Breast epithelium (tissue), 4 donors: ENCODE measurements at regions of chr13 and their contacts with region 1.

Region 1: GRCh38 chr13:39350461-39350881 is 252.5 kb downstream of the LHFPL6 start:
- DNase-seq: no peak
- H3K4me3 ChIP-seq: peak overlapping the region in 1 of 3 donors; percentile 14
- H3K27ac ChIP-seq: peak overlapping the region; percentile 2 to 51
- H3K4me1 ChIP-seq: no peaks in the 10 kb centered on the region
- H3K27me3 ChIP-seq: no peaks in the 10 kb centered on the region
- CTCF ChIP-seq: no peak
- POLR2A ChIP-seq: no peak

Region 2: DNA sequence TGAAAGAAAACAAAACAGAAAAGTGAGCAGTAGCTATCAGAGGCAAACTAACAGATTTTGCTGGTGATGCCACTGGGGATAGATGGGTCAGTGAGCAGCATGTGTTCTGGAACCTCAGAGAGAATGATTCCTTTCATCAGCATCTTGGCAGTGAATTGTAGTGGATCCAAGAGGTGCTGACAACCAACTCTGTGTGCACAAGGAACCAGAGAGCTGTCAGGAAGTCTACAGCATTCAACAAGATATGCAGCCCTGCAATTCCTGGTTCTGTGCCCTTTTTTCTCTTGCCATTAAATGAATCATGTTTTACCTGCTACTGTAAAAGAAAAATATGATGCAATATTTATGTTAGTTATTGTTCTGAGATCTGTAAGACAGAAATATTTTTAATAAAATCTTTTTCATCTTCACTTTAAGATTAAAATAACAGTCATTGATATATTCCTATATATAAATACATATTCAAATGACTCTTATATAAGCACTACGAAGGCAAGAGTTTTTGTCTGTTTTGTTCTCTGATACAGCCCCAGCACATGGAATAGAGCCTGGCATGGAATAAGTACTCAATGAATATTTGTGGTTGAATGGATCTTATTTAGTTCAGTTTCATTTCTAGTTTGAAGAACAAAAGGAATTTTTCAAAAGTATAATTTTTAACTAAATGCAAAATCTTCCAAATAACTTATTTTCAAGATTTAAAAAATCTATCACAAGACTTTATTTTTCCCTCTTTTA is 582.8 kb before region 1 on chr13:
- intact Hi-C with region 1: loop called (anchors 5 kb)
- DNase-seq: no peak
- H3K4me3 ChIP-seq: no peak overlapping the region
- H3K27ac ChIP-seq: no peak overlapping the region
- H3K4me1 ChIP-seq: no peaks in the 10 kb centered on the region
- H3K27me3 ChIP-seq: no peaks in the 10 kb centered on the region
- CTCF ChIP-seq: no peak
- POLR2A ChIP-seq: no peak

Region 3: DNA sequence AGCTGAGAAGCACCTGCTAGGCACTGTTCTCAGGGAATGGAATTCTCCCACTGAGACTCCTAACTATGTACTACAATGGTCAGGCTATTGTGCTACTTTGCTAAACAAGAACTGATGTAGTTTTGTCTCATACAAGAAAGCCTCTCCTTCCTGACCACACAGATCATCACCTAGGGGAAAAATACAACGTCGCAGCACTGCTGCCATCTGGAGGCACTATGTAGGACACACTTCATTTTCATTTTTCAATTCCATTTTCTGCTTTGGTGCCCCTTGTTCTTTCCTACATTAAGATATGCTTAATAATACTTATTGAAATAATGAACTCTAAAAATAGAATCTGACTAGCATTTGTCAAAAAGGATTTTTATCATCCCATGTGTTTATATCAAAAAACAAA is 333.7 kb before region 1 on chr13:
- intact Hi-C with region 1: no loop called
- DNase-seq: no peak
- H3K4me3 ChIP-seq: no peak overlapping the region
- H3K27ac ChIP-seq: no peak overlapping the region
- H3K4me1 ChIP-seq: no peaks in the 10 kb centered on the region
- H3K27me3 ChIP-seq: no peaks in the 10 kb centered on the region
- CTCF ChIP-seq: peak in 1 of 3 donors; percentile 19
- POLR2A ChIP-seq: no peak

Region 4: DNA sequence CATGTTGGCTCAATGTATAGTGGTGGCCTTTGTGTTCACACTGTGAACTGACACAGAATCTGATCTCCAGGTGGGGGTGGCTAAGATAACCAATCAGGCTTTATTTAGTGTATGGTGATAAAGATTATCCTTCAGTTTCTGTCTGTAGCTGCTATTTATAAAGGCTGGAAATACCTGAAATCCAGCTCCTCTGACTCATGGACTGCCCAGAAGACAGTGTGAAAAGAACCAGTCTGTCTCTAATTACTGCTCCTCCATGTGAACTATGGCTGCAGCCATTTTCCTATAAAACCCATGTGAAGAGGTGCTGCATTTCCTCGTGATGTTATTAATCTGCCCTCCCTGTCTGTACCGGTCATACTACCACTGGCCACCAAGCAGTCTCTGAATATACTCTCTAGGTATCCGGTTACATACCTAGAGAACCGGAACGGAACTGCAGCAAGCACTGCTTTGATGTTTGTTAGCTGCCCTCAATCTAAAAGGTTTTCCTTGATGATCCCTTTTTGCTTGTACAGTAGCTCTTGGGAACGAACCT is 14.5 kb after region 1 on chr13:
- intact Hi-C with region 1: loop called (anchors 2 kb)
- DNase-seq: no peak
- H3K4me3 ChIP-seq: peak overlapping the region in 1 of 3 donors; percentile 30
- H3K27ac ChIP-seq: peak overlapping the region in 1 of 2 donors; percentile 34
- H3K4me1 ChIP-seq: no peaks in the 10 kb centered on the region
- H3K27me3 ChIP-seq: no peaks in the 10 kb centered on the region
- CTCF ChIP-seq: no peak
- POLR2A ChIP-seq: no peak

Region 5: GRCh38 chr13:41004875-41005693 is 1654.6 kb after region 1 on chr13:
- intact Hi-C with region 1: no loop called
- DNase-seq: no peak
- H3K4me3 ChIP-seq: no peak overlapping the region
- H3K27ac ChIP-seq: peak overlapping the region in 1 of 2 donors; percentile 24
- H3K4me1 ChIP-seq: no peaks in the 10 kb centered on the region
- H3K27me3 ChIP-seq: no peaks in the 10 kb centered on the region
- CTCF ChIP-seq: no peak
- POLR2A ChIP-seq: no peak